Sciatic nerve (tissue), 2 donors: ENCODE measurements at regions of chr5 and their contacts with region 1.

Region 1: DNA sequence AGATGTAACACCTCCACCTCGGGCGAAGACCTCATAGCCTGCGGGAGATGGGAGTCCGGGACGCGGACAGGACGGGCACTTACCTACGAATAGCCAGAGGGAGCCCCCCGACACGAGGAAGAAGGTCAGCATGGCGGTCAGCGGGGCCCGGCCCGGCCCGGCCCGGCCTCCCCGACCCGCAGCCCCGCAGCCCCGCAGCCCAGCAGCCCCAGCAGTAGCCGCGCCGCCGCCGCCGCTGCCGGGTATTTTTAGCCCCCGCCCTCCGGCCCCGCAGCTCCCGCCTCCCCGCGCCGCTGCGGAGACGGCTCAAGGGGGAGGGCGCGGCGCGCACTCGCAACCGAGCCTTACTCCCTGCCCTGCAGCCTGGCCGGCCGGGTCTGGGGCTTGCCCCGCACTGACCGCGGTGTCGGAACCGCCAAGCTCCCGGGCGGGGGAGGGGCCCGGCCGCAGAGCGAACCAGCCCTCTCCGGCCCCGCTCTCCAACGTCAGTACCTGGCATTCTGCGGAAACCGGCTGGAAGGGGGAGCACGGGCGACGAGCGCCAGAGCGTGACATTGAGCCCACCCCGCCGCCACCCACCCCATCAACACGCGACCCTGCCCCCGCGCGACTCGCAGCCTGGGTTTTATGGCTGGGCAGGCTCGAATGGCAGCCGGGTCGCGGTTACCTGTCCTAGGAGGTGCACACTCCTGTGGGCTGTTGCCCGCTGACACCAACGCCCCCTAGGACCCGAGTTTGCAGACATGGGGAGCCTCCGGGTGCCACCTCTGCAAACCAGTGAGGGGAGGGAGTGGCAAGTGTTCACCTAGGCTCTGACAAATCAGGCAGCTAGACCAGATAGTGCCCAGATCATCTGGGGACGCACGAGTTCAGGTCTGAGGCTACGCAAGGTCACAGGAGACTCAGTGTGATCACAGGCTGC is at the start of gene ACSL6:
- DNase-seq: peak; percentile 51
- ATAC-seq: no peak
- total RNA-seq, gene ACSL6: 3.3 TPM

Region 2: DNA sequence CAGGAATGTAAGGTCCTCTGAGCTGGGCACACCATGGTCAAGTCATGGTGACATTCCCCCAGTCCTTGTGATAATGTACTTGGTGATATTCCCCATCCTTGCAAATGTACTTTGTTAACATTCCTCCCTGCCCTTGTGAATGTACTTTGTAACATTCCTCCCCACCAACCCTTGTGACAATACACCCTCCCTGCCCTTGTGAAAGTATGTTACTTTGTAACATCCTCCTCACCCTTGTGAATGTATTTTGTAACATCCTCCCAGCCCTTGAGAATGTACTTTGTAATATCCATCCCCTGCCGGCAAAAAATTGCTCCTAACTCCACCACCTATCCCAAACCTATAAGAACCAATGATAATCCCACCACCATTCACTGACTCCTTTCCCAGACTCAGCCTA is 430.0 kb before region 1 on chr5:
- intact Hi-C with region 1: loop called (anchors 2 kb)
- DNase-seq: no peak
- ATAC-seq: no peak